ENCODE measurements at regions of chr5 and their contacts with region 1.

Region 1: GRCh38 chr5:179678223-179679013 is 2.4 kb downstream of the CBY3 start:
- DNase-seq: peak; percentile 88 to 94
- H3K4me3 ChIP-seq: peak overlapping the region; percentile 78 to 89 (median 82)
- H3K27ac ChIP-seq: peak overlapping the region; percentile 76
- H3K4me1 ChIP-seq: peaks cover 0 to 12% (median 7%) of the 10 kb centered on the region in 4 experiments; a peak in 5 of 7 replicates
- H3K27me3 ChIP-seq: peaks cover 0 to 4% (median 0%) of the 10 kb centered on the region in 4 experiments; a peak in 1 of 7 replicates
- CTCF ChIP-seq: peak in 1 of 3 experiments; percentile 0; a peak in 1 of 4 replicates
- EP300 ChIP-seq: no peak
- POLR2A ChIP-seq: peak; percentile 80 to 81
- RAD21 ChIP-seq: no peak

Region 2: GRCh38 chr5:179613460-179614071 is 64.9 kb before region 1 on chr5:
- CTCF ChIA-PET with region 1: no interaction called
- POLR2A ChIA-PET with region 1: interaction called, 35 read pairs
- DNase-seq: no peak
- H3K4me3 ChIP-seq: no peak overlapping the region
- H3K27ac ChIP-seq: no peak overlapping the region
- H3K4me1 ChIP-seq: no peaks in the 10 kb centered on the region
- H3K27me3 ChIP-seq: no peaks in the 10 kb centered on the region
- CTCF ChIP-seq: no peak
- EP300 ChIP-seq: no peak
- POLR2A ChIP-seq: peak; percentile 68 to 71
- RAD21 ChIP-seq: no peak

Region 3: GRCh38 chr5:179697993-179698934 is 19.8 kb after region 1 on chr5:
- CTCF ChIA-PET with region 1: interaction called, 13 read pairs
- POLR2A ChIA-PET with region 1: interaction called, 50 read pairs
- DNase-seq: peak; percentile 96 to 98
- H3K4me3 ChIP-seq: peak overlapping the region; percentile 91 to 99 (median 96)
- H3K27ac ChIP-seq: peak overlapping the region; percentile 91
- H3K4me1 ChIP-seq: peaks cover 0 to 9% (median 2%) of the 10 kb centered on the region in 4 experiments; a peak in 3 of 7 replicates
- H3K27me3 ChIP-seq: no peaks in the 10 kb centered on the region
- CTCF ChIP-seq: no peak
- EP300 ChIP-seq: no peak
- POLR2A ChIP-seq: peak; percentile 74 to 82
- RAD21 ChIP-seq: no peak

Region 4: GRCh38 chr5:179732417-179732917 is 54.0 kb after region 1 on chr5 and contains the start of gene MAML1:
- CTCF ChIA-PET with region 1: no interaction called
- POLR2A ChIA-PET with region 1: no interaction called
- DNase-seq: peak; percentile 99 to 100
- H3K4me3 ChIP-seq: peak within 1 kb of the TSS; percentile 64 to 80 (median 76)
- H3K27ac ChIP-seq: peak within 1 kb of the TSS; percentile 85
- H3K4me1 ChIP-seq: peaks cover 0 to 3% (median 3%) of the 10 kb centered on the region in 4 experiments; a peak in 3 of 7 replicates
- H3K27me3 ChIP-seq: no peaks in the 10 kb centered on the region
- CTCF ChIP-seq: 0 out of 4 replicates have a peak, but pooled peaks of 1 of the 3 experiments have one; percentile 1
- EP300 ChIP-seq: no peak
- POLR2A ChIP-seq: peak; percentile 52 to 85
- RAD21 ChIP-seq: no peak
- total RNA-seq, gene MAML1: 41.9 and 45.6 TPM in 2 replicates

Measured in H1 (cell line).